Spleen (tissue), 13 donors: ENCODE measurements at regions of chr19 and their contacts with region 1.

Region 1: GRCh38 chr19:41479757-41480191 is 36.8 kb downstream of the ERICH4 start:
- DNase-seq: peak; percentile 74
- H3K4me3 ChIP-seq: peak overlapping the region in 2 of 8 donors; percentile 2 to 21
- H3K27ac ChIP-seq: peak overlapping the region in 7 of 8 donors; percentile 71 to 86 (median 79)
- H3K4me1 ChIP-seq: peaks cover 0 to 31% (median 7%) of the 10 kb centered on the region in 6 donors
- H3K27me3 ChIP-seq: peaks cover 0 to 28% (median 0%) of the 10 kb centered on the region in 7 donors
- CTCF ChIP-seq: no peak
- POLR2A ChIP-seq: no peak

Region 2: GRCh38 chr19:41505105-41505504 is 25.3 kb after region 1 on chr19:
- intact Hi-C with region 1: no loop called
- DNase-seq: no peak
- H3K4me3 ChIP-seq: no peak overlapping the region
- H3K27ac ChIP-seq: no peak overlapping the region
- H3K4me1 ChIP-seq: peaks cover 0 to 11% (median 4%) of the 10 kb centered on the region in 6 donors
- H3K27me3 ChIP-seq: peaks cover 0 to 44% (median 0%) of the 10 kb centered on the region in 7 donors
- CTCF ChIP-seq: no peak
- POLR2A ChIP-seq: no peak

Region 3: GRCh38 chr19:41515015-41515652 is 35.4 kb after region 1 on chr19:
- intact Hi-C with region 1: loop called (anchors 5 kb)
- DNase-seq: no peak
- H3K4me3 ChIP-seq: no peak overlapping the region
- H3K27ac ChIP-seq: no peak overlapping the region
- H3K4me1 ChIP-seq: peaks cover 4 to 20% (median 15%) of the 10 kb centered on the region in 6 donors
- H3K27me3 ChIP-seq: peaks cover 0 to 58% (median 0%) of the 10 kb centered on the region in 7 donors
- CTCF ChIP-seq: no peak
- POLR2A ChIP-seq: no peak

Region 4: GRCh38 chr19:41531438-41532311 is 51.9 kb after region 1 on chr19:
- intact Hi-C with region 1: no loop called
- DNase-seq: peak; percentile 91
- H3K4me3 ChIP-seq: peak overlapping the region in 6 of 8 donors; percentile 1 to 59 (median 12)
- H3K27ac ChIP-seq: peak overlapping the region; percentile 58 to 91 (median 86)
- H3K4me1 ChIP-seq: peaks cover 29 to 97% (median 68%) of the 10 kb centered on the region in 6 donors
- H3K27me3 ChIP-seq: no peaks in the 10 kb centered on the region
- CTCF ChIP-seq: no peak
- POLR2A ChIP-seq: peak in 2 of 3 donors; percentile 84 to 93